ENCODE measurements at regions of chr2 and their contacts with region 1.

Region 1: GRCh38 chr2:54704688-54705605 is 18.5 kb upstream of the EML6 start:
- DNase-seq: peak in 6 of 9 donors; percentile 26 to 69 (median 58)
- ATAC-seq: peak; percentile 74
- H3K4me3 ChIP-seq: no peak overlapping the region
- H3K4me3 Mint-ChIP-seq: no peak overlapping the region
- H3K27ac ChIP-seq: no peak overlapping the region
- H3K27ac Mint-ChIP-seq: no peak overlapping the region
- H3K4me1 ChIP-seq: no peaks in the 10 kb centered on the region
- H3K4me1 Mint-ChIP-seq: peaks cover 0 to 18% (median 0%) of the 10 kb centered on the region in 7 donors
- H3K27me3 ChIP-seq: no peaks in the 10 kb centered on the region
- H3K27me3 Mint-ChIP-seq: peaks cover 10 to 59% (median 15%) of the 10 kb centered on the region in 5 donors

Region 2: DNA sequence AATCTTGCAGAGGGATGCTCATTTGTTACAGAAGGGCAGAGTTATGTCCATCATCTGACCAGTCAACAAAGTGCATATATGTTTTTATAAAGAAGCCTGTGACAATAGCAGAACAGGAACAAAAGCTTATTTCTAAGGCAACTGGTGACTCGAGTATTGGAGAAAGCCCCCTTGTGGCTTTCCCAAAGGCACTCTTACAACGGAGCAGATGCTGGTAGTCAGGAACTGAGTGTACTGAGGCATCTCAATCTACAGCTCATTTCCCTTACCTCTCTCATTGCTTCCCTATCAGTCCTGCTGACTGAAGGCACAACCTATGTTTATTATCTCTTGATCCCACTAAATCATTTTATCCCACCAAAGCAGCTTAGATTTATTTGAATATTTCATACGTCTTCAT is 1494.4 kb before region 1 on chr2:
- CTCF ChIA-PET with region 1: no interaction called
- POLR2A ChIA-PET with region 1: no interaction called
- intact Hi-C with region 1: no loop called
- DNase-seq: no peak
- ATAC-seq: no peak
- H3K4me3 ChIP-seq: no peak overlapping the region
- H3K4me3 Mint-ChIP-seq: no peak overlapping the region
- H3K27ac ChIP-seq: no peak overlapping the region
- H3K27ac Mint-ChIP-seq: no peak overlapping the region
- H3K4me1 ChIP-seq: no peaks in the 10 kb centered on the region
- H3K4me1 Mint-ChIP-seq: no peaks in the 10 kb centered on the region
- H3K27me3 ChIP-seq: no peaks in the 10 kb centered on the region
- H3K27me3 Mint-ChIP-seq: no peaks in the 10 kb centered on the region

Region 3: GRCh38 chr2:54106631-54107454 is 598.1 kb before region 1 on chr2:
- CTCF ChIA-PET with region 1: interaction called, 21 read pairs
- POLR2A ChIA-PET with region 1: interaction called, 3 read pairs
- intact Hi-C with region 1: loop called (anchors 1 kb)
- DNase-seq: peak in 7 of 9 donors; percentile 39 to 68 (median 51)
- ATAC-seq: peak; percentile 86
- H3K4me3 ChIP-seq: no peak overlapping the region
- H3K4me3 Mint-ChIP-seq: peak overlapping the region in 1 of 10 donors; percentile 28
- H3K27ac ChIP-seq: no peak overlapping the region
- H3K27ac Mint-ChIP-seq: peak overlapping the region in 2 of 9 donors; percentile 20 to 31
- H3K4me1 ChIP-seq: peaks cover 0 to 4% of the 10 kb centered on the region in 2 donors
- H3K4me1 Mint-ChIP-seq: peaks cover 0 to 12% (median 9%) of the 10 kb centered on the region in 7 donors
- H3K27me3 ChIP-seq: no peaks in the 10 kb centered on the region
- H3K27me3 Mint-ChIP-seq: peaks cover 0 to 15% (median 0%) of the 10 kb centered on the region in 5 donors

Region 4: DNA sequence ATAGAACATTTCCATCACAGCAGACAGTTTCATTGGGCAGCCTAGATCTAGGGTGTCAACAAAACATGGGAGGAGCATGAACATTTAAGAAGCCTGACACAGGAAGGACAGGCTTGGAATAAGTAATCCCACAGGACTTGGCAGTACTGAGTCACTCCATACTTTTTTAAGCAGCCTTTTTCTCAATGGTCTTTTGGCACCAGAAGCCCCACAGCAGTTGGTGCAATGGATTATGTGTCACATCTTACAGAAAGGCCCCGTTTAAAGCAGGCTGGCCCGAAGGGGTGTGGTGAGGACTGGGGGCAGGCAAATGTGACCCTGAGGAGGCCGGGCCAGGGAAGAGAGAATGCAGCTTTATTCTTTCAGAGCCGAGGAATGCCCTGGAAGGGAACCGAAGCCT is 222.2 kb before region 1 on chr2:
- CTCF ChIA-PET with region 1: no interaction called
- POLR2A ChIA-PET with region 1: no interaction called
- intact Hi-C with region 1: no loop called
- DNase-seq: no peak
- ATAC-seq: no peak
- H3K4me3 ChIP-seq: no peak overlapping the region
- H3K4me3 Mint-ChIP-seq: no peak overlapping the region
- H3K27ac ChIP-seq: no peak overlapping the region
- H3K27ac Mint-ChIP-seq: no peak overlapping the region
- H3K4me1 ChIP-seq: no peaks in the 10 kb centered on the region
- H3K4me1 Mint-ChIP-seq: no peaks in the 10 kb centered on the region
- H3K27me3 ChIP-seq: no peaks in the 10 kb centered on the region
- H3K27me3 Mint-ChIP-seq: peaks cover 0 to 12% (median 6%) of the 10 kb centered on the region in 5 donors

Region 5: GRCh38 chr2:54522624-54523281 is 182.2 kb before region 1 on chr2:
- CTCF ChIA-PET with region 1: interaction called, 117 read pairs
- POLR2A ChIA-PET with region 1: interaction called, 3 read pairs
- intact Hi-C with region 1: loop called (anchors 1 kb)
- DNase-seq: peak; percentile 34 to 83 (median 74)
- ATAC-seq: peak; percentile 97
- H3K4me3 ChIP-seq: no peak overlapping the region
- H3K4me3 Mint-ChIP-seq: peak overlapping the region in 4 of 10 donors; percentile 12 to 45 (median 30)
- H3K27ac ChIP-seq: no peak overlapping the region
- H3K27ac Mint-ChIP-seq: peak overlapping the region in 7 of 9 donors; percentile 29 to 90 (median 62)
- H3K4me1 ChIP-seq: no peaks in the 10 kb centered on the region
- H3K4me1 Mint-ChIP-seq: peaks cover 4 to 23% (median 10%) of the 10 kb centered on the region in 7 donors
- H3K27me3 ChIP-seq: no peaks in the 10 kb centered on the region
- H3K27me3 Mint-ChIP-seq: peaks cover 0 to 27% (median 0%) of the 10 kb centered on the region in 5 donors

Region 6: GRCh38 chr2:54657664-54658083 is 47.3 kb before region 1 on chr2:
- CTCF ChIA-PET with region 1: interaction called, 3 read pairs
- POLR2A ChIA-PET with region 1: no interaction called
- intact Hi-C with region 1: loop called in 1 of 2 experiments (anchors 2 kb)
- DNase-seq: peak in 2 of 9 donors; percentile 17
- ATAC-seq: peak; percentile 74
- H3K4me3 ChIP-seq: no peak overlapping the region
- H3K4me3 Mint-ChIP-seq: peak overlapping the region in 2 of 10 donors; percentile 32 to 62
- H3K27ac ChIP-seq: no peak overlapping the region
- H3K27ac Mint-ChIP-seq: peak overlapping the region; percentile 33 to 94 (median 51)
- H3K4me1 ChIP-seq: no peaks in the 10 kb centered on the region
- H3K4me1 Mint-ChIP-seq: peaks cover 0 to 29% (median 0%) of the 10 kb centered on the region in 7 donors
- H3K27me3 ChIP-seq: no peaks in the 10 kb centered on the region
- H3K27me3 Mint-ChIP-seq: no peaks in the 10 kb centered on the region

Region 7: DNA sequence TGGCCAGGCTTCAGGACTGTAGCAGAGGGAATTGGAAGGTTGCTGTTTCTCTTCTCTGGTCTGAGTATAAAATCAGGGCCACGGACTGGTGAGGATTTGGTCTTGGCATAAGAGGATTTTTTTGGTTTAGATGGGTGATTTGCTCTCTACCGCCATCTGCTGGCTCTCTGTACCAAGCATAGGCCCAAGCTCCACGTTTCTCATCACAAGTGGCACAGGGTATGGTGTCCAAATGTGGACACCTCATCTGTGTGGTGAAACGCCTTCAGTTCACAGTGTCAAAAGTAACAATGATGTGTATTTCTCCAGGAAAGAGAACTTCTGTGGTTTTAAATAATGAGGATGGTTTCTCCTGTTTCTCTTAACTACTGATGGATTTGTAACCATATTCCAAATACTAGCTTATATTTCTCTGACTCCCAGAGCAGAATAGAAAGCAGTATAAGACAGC is 133.7 kb after region 1 on chr2:
- CTCF ChIA-PET with region 1: interaction called, 11 read pairs
- POLR2A ChIA-PET with region 1: no interaction called
- intact Hi-C with region 1: loop called in 1 of 2 experiments (anchors 1 kb)
- DNase-seq: peak; percentile 25 to 61 (median 45)
- ATAC-seq: peak; percentile 87
- H3K4me3 ChIP-seq: no peak overlapping the region
- H3K4me3 Mint-ChIP-seq: no peak overlapping the region
- H3K27ac ChIP-seq: no peak overlapping the region
- H3K27ac Mint-ChIP-seq: no peak overlapping the region
- H3K4me1 ChIP-seq: no peaks in the 10 kb centered on the region
- H3K4me1 Mint-ChIP-seq: no peaks in the 10 kb centered on the region
- H3K27me3 ChIP-seq: no peaks in the 10 kb centered on the region
- H3K27me3 Mint-ChIP-seq: peaks cover 0 to 2% (median 0%) of the 10 kb centered on the region in 5 donors